ENCODE measurements at regions of chr2 and their contacts with region 1.

Region 1: DNA sequence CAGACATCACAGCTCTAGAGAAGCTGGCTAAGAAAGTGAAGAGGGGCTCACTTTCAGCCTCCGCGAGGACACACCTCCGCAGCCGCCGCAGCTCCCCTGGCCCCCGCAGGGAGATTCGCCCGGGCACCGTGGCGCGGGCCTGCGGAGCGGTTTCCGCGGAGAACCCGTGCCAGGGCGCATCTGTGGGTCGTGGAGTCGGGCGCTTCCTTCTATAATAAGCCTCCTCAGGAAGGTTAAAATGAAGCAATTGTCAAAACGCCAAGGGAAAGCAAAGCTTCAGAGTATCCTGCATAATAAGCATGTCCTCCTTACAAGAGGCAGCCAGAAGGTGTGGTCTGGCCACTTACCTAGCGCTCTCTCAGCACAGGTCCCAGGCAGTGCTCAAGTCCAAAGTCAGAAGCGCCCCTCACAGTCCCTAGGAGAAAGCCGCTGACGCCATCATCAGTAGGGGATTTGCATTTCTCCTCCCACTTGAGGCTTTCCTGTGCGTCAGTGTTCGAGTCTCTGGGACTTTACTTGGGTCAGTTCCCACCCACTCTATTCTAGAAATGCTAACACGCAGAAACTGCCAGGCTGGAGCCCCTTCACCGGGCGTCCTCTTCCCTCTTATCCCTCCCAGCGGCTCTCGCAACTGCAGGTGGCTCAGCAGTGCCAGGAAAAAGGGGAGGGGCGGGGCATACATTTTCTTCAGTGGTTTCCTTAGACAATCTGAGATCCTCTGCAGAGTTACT is at the start of gene STAT4:
- DNase-seq: peak; percentile 58
- H3K4me3 ChIP-seq: peak within 1 kb of the TSS; percentile 13 to 54 (median 45)
- H3K27ac ChIP-seq: no peak within 1 kb of the TSS
- H3K4me1 ChIP-seq: no peaks in the 10 kb centered on the region
- H3K27me3 ChIP-seq: peaks cover 3 to 6% of the 10 kb centered on the region in 2 experiments
- CTCF ChIP-seq: no peak
- POLR2A ChIP-seq: no peak
- total RNA-seq, gene STAT4: 0.46 and 0.88 TPM in 2 replicates

Region 2: GRCh38 chr2:190781604-190782198 is 369.1 kb before region 1 on chr2:
- CTCF ChIA-PET with region 1: interaction called, 19 read pairs
- POLR2A ChIA-PET with region 1: no interaction called
- dilution Hi-C with region 1: no loop called
- intact Hi-C with region 1: loop called (anchors 5 kb)
- DNase-seq: peak; percentile 76
- H3K4me3 ChIP-seq: no peak overlapping the region
- H3K27ac ChIP-seq: no peak overlapping the region
- H3K4me1 ChIP-seq: no peaks in the 10 kb centered on the region
- H3K27me3 ChIP-seq: peaks cover 0 to 2% of the 10 kb centered on the region in 2 experiments
- CTCF ChIP-seq: peak; percentile 36 to 53
- POLR2A ChIP-seq: no peak

Region 3: DNA sequence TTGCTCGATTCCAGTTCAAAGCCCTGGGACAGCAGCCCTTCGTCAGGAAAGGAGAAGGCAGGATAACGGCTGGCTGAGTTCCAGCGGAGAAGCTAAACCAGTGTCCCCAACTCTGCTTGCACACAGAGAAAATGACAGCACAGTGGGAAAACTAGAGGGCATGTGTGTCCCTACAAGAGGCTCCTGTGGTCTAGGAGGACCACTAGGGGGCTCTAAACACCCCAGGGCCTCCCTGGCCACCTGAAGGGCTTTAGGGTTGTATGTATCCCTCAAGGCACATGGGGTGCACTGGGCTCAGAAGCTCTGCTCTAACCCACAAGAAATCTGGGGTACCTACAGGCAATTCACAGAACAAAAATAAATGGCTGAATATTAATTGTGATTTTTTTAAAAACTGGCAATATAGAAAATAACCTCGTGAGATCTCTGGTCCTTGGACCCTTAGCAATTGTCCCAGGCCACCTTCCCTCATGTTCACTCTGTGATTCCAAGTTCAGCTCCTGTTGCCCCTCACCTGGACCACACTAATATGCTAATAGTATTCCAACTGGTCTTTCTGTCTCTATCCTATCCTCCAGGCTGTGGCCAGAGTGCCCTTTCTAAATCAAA is 154.3 kb before region 1 on chr2:
- CTCF ChIA-PET with region 1: interaction called, 6 read pairs
- POLR2A ChIA-PET with region 1: no interaction called
- dilution Hi-C with region 1: no loop called
- intact Hi-C with region 1: loop called (anchors 2 kb)
- DNase-seq: peak; percentile 48
- H3K4me3 ChIP-seq: no peak overlapping the region
- H3K27ac ChIP-seq: no peak overlapping the region
- H3K4me1 ChIP-seq: no peaks in the 10 kb centered on the region
- H3K27me3 ChIP-seq: no peaks in the 10 kb centered on the region
- CTCF ChIP-seq: peak; percentile 74 to 86
- POLR2A ChIP-seq: no peak

Region 4: GRCh38 chr2:191038241-191038725 is 112.5 kb before region 1 on chr2:
- CTCF ChIA-PET with region 1: interaction called, 10 read pairs
- POLR2A ChIA-PET with region 1: no interaction called
- dilution Hi-C with region 1: no loop called
- intact Hi-C with region 1: no loop called
- DNase-seq: peak; percentile 57
- H3K4me3 ChIP-seq: no peak overlapping the region
- H3K27ac ChIP-seq: no peak overlapping the region
- H3K4me1 ChIP-seq: peaks cover 26% of the 10 kb centered on the region
- H3K27me3 ChIP-seq: no peaks in the 10 kb centered on the region
- CTCF ChIP-seq: no peak
- POLR2A ChIP-seq: no peak

Region 5: DNA sequence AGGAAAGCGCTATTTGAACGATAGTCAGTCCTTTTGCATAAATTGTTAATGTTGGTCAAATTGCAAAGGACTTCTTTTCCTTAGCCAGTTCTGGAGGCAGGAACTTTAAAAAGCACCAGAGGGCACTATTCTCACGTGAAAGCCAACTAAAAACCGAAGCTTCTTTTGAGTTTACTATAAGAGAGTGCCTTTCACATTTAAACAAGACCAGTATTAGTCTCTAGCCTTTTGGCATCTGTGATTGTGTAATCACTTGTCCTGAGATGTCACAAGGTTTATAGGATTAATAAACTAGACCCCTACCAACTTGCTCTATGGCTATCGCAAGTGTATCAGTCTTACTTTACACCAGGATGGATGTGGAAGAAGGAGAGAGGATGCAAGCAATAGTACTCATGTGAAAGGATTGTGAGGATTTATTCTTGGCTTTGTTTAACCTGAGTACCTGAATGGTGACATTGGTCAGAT is 14.4 kb after region 1 on chr2:
- CTCF ChIA-PET with region 1: interaction called, 15 read pairs
- POLR2A ChIA-PET with region 1: no interaction called
- dilution Hi-C with region 1: no loop called
- intact Hi-C with region 1: no loop called
- DNase-seq: peak; percentile 68
- H3K4me3 ChIP-seq: no peak overlapping the region
- H3K27ac ChIP-seq: no peak overlapping the region
- H3K4me1 ChIP-seq: peaks cover 3% of the 10 kb centered on the region
- H3K27me3 ChIP-seq: no peaks in the 10 kb centered on the region
- CTCF ChIP-seq: peak; percentile 48 to 52
- POLR2A ChIP-seq: no peak

Region 6: DNA sequence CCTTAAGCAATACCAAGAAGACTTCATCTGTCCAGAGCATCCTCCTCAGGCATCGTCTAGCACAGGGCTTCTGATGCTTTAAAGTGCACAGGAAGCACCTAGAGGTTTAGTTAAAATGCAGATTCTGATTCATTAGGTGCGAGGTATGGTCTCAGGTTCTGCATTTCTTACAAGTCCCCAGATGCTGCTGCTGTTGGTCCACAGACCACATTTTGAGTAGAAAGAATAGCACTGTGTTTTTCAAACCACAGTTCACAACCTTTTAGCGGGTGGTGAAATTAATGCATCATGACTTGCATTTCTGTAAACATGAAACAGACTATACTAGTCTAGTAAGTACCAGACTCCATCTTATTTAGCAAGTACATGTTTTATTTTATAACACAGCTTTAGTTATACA is 909.4 kb after region 1 on chr2:
- CTCF ChIA-PET with region 1: no interaction called
- POLR2A ChIA-PET with region 1: no interaction called
- dilution Hi-C with region 1: no loop called
- intact Hi-C with region 1: no loop called
- DNase-seq: no peak
- H3K4me3 ChIP-seq: no peak overlapping the region
- H3K27ac ChIP-seq: no peak overlapping the region
- H3K4me1 ChIP-seq: no peaks in the 10 kb centered on the region
- H3K27me3 ChIP-seq: no peaks in the 10 kb centered on the region
- CTCF ChIP-seq: no peak
- POLR2A ChIP-seq: no peak